Breast epithelium (tissue), 4 donors: ENCODE measurements at regions of chr9 and their contacts with region 1.

Region 1: DNA sequence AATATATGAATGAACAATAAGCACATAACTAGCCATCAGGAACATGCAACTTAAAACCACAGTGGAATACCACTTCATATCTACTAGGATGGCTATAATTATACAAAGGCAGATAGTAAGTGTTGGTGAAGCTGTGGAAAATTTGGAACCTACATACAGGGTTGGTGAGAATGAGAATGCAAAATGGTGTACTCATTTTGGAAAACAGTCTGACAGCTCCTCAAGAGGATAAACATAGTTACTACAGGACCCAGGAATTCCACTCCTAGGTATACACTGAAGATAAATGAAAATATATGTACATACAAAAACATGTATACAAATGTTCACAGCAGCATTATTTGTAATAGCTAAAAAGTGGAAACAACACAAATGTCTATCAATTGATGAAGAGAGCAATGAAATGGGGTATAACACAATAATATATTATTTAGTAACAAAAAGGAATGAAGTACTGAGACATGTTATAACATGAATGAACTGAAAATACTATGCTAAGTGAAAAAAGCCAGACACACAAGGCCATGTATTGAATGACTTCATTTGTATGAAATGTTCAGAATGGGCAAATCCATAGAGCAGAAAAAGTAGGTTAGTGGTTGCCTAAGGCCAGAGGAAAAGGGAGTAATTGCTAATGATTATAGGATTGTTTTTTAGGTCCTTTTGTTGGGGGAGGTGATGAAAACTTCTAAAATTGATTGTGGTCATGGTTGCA is 31.2 kb upstream of the CDK5RAP2 start:
- DNase-seq: no peak
- H3K4me3 ChIP-seq: no peak overlapping the region
- H3K27ac ChIP-seq: no peak overlapping the region
- H3K4me1 ChIP-seq: no peaks in the 10 kb centered on the region
- H3K27me3 ChIP-seq: no peaks in the 10 kb centered on the region
- CTCF ChIP-seq: no peak
- POLR2A ChIP-seq: no peak

Region 2: DNA sequence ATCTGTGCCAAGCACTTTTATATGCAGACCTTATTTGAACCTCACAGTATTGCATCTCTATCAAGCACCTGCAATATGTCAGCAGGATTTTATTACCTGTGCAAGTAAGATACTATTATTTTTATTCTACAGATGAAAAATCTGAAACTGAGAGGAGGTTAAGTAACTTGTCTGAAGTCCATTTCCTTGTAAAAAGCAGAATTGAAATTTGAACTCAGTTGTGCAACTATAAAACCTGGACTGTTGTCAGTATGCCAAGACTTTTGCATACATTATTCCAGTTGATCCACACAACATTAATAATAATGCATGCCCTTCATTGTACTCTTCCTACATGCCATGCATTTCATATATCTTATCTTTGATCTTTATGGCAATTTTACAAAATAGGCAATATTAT is 1159.7 kb before region 1 on chr9:
- intact Hi-C with region 1: no loop called
- DNase-seq: no peak
- H3K4me3 ChIP-seq: no peak overlapping the region
- H3K27ac ChIP-seq: no peak overlapping the region
- H3K4me1 ChIP-seq: no peaks in the 10 kb centered on the region
- H3K27me3 ChIP-seq: no peaks in the 10 kb centered on the region
- CTCF ChIP-seq: no peak
- POLR2A ChIP-seq: no peak

Region 3: GRCh38 chr9:121074635-121075385 is 463.7 kb after region 1 on chr9 and contains the start of gene CNTRL:
- intact Hi-C with region 1: loop called (anchors 5 kb)
- DNase-seq: peak; percentile 85 to 86
- H3K4me3 ChIP-seq: peak within 1 kb of the TSS; percentile 74 to 81 (median 80)
- H3K27ac ChIP-seq: peak within 1 kb of the TSS; percentile 95 to 96
- H3K4me1 ChIP-seq: no peaks in the 10 kb centered on the region
- H3K27me3 ChIP-seq: no peaks in the 10 kb centered on the region
- CTCF ChIP-seq: peak in 1 of 3 donors; percentile 27
- POLR2A ChIP-seq: peak; percentile 60
- total RNA-seq, gene CNTRL: 18.4 to 26.8 (median 22.9) TPM